ENCODE measurements at regions of chr1 and their contacts with region 1.

Region 1: GRCh38 chr1:198465201-198466144 is 75.0 kb downstream of the ATP6V1G3 start:
- DNase-seq: peak; percentile 82
- H3K4me3 ChIP-seq: no peak overlapping the region
- H3K27ac ChIP-seq: peak overlapping the region; percentile 65
- H3K4me1 ChIP-seq: peaks cover 49% of the 10 kb centered on the region
- H3K27me3 ChIP-seq: no peaks in the 10 kb centered on the region

Region 2: DNA sequence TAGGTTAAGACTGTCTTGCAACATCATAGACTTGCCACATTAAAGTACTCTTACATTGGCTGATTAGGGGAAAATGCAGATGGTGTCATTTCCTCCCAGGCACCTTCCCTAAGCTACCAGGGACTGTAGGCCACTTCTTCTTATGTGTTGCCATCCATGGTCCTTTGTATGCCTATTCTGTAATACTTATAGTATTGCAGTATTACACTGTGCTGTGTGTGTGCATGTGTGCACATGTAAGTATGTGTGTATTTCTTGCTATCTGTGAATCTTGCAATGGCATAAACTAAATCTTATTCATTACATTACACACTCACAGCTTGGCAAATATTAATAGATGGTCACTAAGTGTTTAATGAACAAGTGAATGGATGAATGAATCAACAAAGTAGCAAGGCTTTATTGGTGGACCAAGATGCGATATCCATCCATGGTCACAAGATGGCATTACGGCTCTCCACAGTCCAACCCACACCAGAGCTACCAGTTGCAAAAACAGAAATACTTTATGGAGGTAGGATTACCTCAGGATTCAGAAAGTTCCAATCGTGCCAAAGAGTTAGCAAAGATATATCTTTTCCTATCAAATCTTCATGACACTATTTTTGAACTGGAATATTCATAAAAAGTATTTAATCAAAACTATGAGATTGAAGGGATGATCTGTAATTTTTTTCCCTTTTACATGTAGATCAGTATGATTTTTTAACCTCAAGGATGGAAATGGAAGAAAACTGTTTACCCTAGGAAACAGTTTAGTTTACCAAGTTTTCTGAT is 850.4 kb before region 1 on chr1:
- in situ Hi-C with region 1: loop called (anchors 25 kb)
- DNase-seq: peak; percentile 71
- H3K4me3 ChIP-seq: no peak overlapping the region
- H3K27ac ChIP-seq: no peak overlapping the region
- H3K4me1 ChIP-seq: no peaks in the 10 kb centered on the region
- H3K27me3 ChIP-seq: no peaks in the 10 kb centered on the region

Region 3: DNA sequence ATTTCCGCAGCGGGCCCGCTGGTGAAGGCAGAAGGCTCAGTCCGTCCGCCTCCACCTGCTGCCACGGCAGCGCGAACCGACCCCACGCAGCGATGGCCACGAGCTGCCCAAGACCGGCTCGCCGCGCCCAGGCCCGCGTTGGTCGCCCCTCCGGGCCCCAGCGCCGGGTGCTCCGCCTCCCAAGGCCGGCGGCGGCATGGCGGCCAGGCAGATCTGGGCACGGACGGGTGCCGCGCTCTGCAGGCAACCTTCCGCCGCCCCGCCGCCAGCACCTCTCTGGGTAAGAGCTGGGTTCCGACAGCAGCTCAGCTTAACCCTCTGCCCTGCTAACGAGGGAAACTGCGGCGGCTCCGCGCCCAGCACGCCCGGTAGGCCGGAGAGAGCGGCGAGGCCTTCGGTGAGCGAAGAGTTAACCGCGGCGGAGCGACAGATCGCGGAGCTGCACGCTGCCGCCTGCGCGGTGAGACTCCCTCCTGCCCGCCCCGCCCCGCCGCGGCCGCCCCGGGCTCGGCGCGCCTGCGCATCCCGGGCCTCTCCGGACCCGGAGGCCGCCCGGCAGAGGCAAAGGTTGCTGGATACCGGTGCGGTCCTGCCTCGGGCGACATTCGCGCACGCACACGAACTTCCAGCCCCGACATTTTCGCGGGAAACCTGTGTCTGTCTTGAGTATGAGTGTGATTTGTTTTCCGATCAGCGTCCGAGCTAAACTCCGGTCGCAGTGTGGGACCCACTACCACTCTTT is 562.8 kb before region 1 on chr1 and contains the start of gene C1orf53:
- in situ Hi-C with region 1: loop called (anchors 25 kb)
- DNase-seq: peak; percentile 97
- H3K4me3 ChIP-seq: peak within 1 kb of the TSS; percentile 90
- H3K27ac ChIP-seq: peak within 1 kb of the TSS; percentile 77
- H3K4me1 ChIP-seq: peaks cover 11% of the 10 kb centered on the region
- H3K27me3 ChIP-seq: no peaks in the 10 kb centered on the region
- total RNA-seq, gene C1orf53: 17.3 and 90.2 TPM in 2 replicates

Region 4: DNA sequence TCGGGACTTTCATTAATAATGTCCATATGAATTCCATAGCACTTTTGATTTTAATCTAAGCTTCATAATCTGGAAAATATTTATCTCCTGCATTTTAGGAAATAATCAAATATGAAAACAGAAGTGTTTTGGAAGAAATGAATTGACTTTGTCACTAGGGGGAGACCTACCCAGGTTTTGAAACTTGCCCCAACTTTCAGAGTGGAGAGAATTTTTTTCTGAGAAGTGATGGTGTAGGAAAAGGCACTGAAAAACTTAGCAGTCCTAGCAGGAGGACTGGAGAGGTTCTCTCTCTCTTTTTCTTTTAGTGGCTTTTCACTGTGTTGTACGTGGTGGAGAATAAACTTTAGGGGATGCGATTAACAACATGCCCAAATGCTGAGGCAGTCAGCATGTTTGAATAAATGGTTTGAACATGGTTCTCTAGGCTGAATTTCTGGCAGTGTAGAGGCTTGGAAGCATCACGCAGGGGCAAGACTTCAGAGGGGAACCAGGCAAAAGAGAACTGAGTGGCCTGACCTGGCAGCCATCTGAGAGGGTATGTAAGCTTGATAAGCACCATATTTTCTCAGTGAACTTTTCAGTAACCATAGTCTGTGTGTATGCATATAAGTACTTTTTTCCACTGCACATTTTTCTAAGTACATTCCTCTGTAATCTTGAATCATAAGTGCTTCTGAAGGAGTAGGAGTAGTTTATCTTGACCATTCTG is 377.0 kb before region 1 on chr1:
- in situ Hi-C with region 1: loop called (anchors 25 kb)
- DNase-seq: peak; percentile 74
- H3K4me3 ChIP-seq: peak overlapping the region; percentile 61
- H3K27ac ChIP-seq: peak overlapping the region; percentile 68
- H3K4me1 ChIP-seq: peaks cover 29% of the 10 kb centered on the region
- H3K27me3 ChIP-seq: no peaks in the 10 kb centered on the region

Measured in GM23248 (cell line).